AG04449 (cell line): ENCODE measurements at regions of chr2 and their contacts with region 1.

Region 1: GRCh38 chr2:166361351-166362153 is 14.2 kb downstream of the SCN9A start:
- DNase-seq: no peak
- H3K4me3 ChIP-seq: no peak overlapping the region
- CTCF ChIP-seq: peak; percentile 53

Region 2: DNA sequence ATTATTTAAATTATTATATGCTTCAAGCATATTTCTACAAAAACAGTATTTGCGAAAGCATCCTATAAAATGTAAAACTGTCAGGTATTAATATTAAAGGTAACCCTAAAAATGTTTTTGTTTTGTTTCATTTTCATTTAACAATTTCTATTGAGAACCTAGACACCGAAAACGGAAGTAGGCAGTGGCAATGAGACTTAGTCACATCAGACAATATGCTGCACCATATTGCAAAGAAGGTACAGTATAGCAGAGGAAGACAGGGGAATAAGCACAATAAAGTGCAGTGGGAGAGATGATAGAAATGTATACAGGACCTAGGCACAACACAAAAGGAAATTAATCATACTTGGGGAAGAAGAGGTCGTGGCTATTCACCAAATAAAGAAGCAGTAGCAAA is 246.0 kb before region 1 on chr2:
- CTCF ChIA-PET with region 1: no interaction called
- POLR2A ChIA-PET with region 1: no interaction called
- DNase-seq: no peak
- H3K4me3 ChIP-seq: no peak overlapping the region
- CTCF ChIP-seq: no peak

Region 3: GRCh38 chr2:166344286-166345113 is 17.1 kb before region 1 on chr2:
- CTCF ChIA-PET with region 1: interaction called, 12 read pairs
- POLR2A ChIA-PET with region 1: no interaction called
- DNase-seq: peak; percentile 69
- H3K4me3 ChIP-seq: no peak overlapping the region
- CTCF ChIP-seq: no peak

Region 4: DNA sequence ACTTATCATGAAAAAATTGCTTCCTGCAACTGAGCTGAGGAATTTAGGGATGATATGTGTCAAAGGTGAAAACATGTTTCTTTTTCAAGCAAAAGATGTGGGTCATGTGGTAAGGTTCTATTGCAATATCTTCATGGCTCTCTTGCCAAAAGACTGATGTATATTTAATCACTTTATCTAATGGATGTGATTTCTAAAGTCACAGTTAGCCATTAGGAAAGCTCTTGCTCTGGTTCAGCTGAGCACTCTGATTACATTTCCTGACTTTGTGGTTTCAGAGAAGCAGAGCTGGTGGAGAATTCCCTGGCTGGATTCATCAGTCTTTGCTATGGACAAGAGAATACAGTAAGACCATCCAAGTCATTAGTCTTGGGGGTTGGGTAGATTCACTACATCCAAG is 10.2 kb before region 1 on chr2:
- CTCF ChIA-PET with region 1: interaction called, 25 read pairs
- POLR2A ChIA-PET with region 1: no interaction called
- DNase-seq: peak; percentile 54
- H3K4me3 ChIP-seq: no peak overlapping the region
- CTCF ChIP-seq: no peak

Region 5: GRCh38 chr2:166375736-166376487 is 14.4 kb after region 1 on chr2 and contains the start of gene SCN9A:
- CTCF ChIA-PET with region 1: interaction called, 45 read pairs
- POLR2A ChIA-PET with region 1: interaction called, 4 read pairs
- DNase-seq: no peak
- H3K4me3 ChIP-seq: peak within 1 kb of the TSS; percentile 71
- CTCF ChIP-seq: no peak

Region 6: DNA sequence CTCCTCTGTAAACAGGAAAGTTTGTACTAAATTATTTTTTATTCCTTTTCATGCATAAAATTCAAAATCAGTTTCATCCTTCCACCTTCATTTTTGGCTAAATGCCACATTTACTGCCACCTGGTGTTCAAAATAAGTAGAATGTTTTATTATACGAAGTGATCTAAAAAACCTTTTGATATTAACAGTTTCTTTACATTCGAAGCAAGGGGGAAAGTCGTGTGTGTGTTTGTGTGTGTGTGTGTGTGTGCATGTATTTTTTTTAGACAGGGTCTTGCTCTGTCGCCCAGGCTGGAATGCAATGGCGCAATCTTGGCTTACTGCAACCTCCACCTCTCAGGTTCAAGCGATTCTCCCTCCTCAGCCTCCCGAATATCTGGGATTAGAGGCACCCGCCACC is 23.2 kb after region 1 on chr2:
- CTCF ChIA-PET with region 1: interaction called, 39 read pairs
- POLR2A ChIA-PET with region 1: no interaction called
- DNase-seq: no peak
- H3K4me3 ChIP-seq: no peak overlapping the region
- CTCF ChIP-seq: no peak

Region 7: DNA sequence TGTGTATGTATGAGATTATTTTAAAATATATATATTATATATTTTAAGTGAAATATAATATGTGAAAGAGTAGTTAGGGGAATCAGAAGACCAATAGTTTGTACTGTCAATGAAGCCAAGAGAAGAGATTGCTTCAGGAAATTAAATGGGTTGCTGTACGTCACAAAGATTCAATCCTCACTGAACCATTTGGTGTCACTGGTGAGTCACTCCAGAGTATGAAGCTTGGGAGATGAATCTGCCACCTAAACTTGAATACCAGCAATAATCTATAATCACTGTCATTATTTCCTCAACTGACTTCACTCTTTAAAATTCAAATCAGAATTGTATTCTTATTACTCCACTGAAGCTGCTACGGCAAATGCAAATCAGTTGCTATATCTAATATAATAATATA is 56.1 kb after region 1 on chr2:
- CTCF ChIA-PET with region 1: interaction called, 16 read pairs
- POLR2A ChIA-PET with region 1: no interaction called
- DNase-seq: no peak
- H3K4me3 ChIP-seq: no peak overlapping the region
- CTCF ChIP-seq: no peak